WTC11 (cell line): ENCODE measurements at regions of chr5 and their contacts with region 1.

Region 1: GRCh38 chr5:139633295-139634027 is 14.7 kb upstream of the CXXC5 start:
- DNase-seq: peak; percentile 71
- ATAC-seq: peak; percentile 47
- H3K4me3 Mint-ChIP-seq: no peak overlapping the region
- H3K27ac Mint-ChIP-seq: no peak overlapping the region
- H3K4me1 Mint-ChIP-seq: peaks cover 41% of the 10 kb centered on the region
- H3K27me3 Mint-ChIP-seq: no peaks in the 10 kb centered on the region
- CTCF ChIP-seq: peak; percentile 94

Region 2: DNA sequence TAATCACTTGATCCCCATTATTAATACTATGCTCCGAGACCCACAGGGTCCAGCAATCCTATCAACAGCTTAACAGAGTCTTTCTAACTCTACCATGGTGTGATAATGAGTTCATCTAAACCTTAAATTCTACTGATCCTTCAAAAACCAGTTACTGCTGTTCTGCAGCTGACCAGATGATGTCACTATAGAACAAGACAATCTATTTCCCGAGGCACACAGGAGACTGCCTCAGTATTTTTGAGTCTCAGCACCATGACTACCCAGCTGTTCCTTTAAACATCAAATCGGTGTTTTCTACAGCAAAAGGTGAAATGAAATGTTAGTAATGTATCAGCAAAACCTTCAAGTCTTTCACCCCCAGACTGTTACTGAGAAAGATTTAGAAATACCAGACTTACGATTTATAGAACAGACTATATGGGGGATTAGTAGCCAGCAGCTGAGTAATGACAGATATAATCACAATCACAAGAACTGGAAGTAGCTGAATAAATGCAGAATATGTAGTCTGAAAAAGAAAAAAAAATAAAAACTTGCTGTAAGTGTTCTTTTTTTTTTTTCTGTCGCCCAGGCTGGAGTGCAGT is 211.1 kb before region 1 on chr5:
- CTCF ChIA-PET with region 1: interaction called, 13 read pairs
- POLR2A ChIA-PET with region 1: no interaction called
- DNase-seq: no peak
- ATAC-seq: peak; percentile 89
- H3K4me3 Mint-ChIP-seq: no peak overlapping the region
- H3K27ac Mint-ChIP-seq: peak overlapping the region; percentile 60; the same call in 1 of the 2 replicates
- H3K4me1 Mint-ChIP-seq: peaks cover 9% of the 10 kb centered on the region
- H3K27me3 Mint-ChIP-seq: no peaks in the 10 kb centered on the region; the same call in 1 of the 2 replicates
- CTCF ChIP-seq: no peak

Region 3: GRCh38 chr5:139574641-139575312 is 58.7 kb before region 1 on chr5:
- CTCF ChIA-PET with region 1: interaction called, 25 read pairs
- POLR2A ChIA-PET with region 1: interaction called, 3 read pairs
- DNase-seq: no peak
- ATAC-seq: peak; percentile 74
- H3K4me3 Mint-ChIP-seq: no peak overlapping the region
- H3K27ac Mint-ChIP-seq: peak overlapping the region; percentile 96
- H3K4me1 Mint-ChIP-seq: peaks cover 32% of the 10 kb centered on the region
- H3K27me3 Mint-ChIP-seq: no peaks in the 10 kb centered on the region
- CTCF ChIP-seq: no peak

Region 4: DNA sequence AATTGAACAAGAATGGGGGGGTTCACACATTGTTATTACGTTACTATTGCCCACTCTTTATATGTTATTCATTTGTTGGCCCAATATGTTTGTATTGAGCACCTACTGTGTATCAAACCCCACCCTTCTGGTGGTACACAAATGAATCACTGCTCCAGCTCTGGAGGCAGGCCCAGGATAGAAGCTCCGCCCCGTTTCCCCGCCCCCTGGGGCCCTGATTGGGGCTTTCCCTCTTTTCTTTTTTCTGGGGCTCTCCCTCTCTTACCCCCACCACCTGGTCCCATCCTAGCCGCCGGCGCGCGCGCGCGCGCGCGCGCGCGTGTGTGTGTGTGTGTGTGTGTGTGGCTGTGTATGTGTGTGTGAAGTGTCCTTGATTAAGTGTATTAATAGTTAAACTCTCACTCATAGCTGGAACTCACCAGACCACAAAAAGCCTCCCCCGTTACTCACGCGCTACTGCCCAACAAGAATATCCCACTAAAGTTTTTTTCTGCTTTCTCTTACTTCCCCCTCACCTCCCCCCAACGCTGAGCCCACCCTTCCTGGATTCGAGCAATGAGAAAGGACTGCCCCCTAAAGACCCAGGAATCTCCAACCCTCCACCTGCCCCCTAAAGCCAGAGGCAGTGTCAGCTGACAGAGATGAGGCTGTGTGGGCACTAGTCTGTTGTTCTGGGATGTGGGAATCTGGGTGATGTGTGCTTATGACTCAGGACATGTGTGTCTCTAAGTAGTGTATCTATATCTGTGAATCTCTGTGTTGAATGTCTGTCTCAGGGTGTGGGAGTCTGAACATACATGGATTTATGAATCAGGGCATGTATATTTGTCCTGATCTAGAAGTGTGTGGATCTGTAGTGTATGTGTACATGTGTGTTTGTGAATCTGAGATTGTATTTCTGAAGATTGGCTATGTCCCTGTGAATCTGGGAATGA is 18.7 kb after region 1 on chr5:
- CTCF ChIA-PET with region 1: interaction called, 235 read pairs
- POLR2A ChIA-PET with region 1: interaction called, 54 read pairs
- DNase-seq: peak; percentile 92
- ATAC-seq: peak; percentile 33
- H3K4me3 Mint-ChIP-seq: peak overlapping the region; percentile 98
- H3K27ac Mint-ChIP-seq: peak overlapping the region; percentile 96
- H3K4me1 Mint-ChIP-seq: peaks cover 63% of the 10 kb centered on the region
- H3K27me3 Mint-ChIP-seq: no peaks in the 10 kb centered on the region
- CTCF ChIP-seq: no peak

Region 5: DNA sequence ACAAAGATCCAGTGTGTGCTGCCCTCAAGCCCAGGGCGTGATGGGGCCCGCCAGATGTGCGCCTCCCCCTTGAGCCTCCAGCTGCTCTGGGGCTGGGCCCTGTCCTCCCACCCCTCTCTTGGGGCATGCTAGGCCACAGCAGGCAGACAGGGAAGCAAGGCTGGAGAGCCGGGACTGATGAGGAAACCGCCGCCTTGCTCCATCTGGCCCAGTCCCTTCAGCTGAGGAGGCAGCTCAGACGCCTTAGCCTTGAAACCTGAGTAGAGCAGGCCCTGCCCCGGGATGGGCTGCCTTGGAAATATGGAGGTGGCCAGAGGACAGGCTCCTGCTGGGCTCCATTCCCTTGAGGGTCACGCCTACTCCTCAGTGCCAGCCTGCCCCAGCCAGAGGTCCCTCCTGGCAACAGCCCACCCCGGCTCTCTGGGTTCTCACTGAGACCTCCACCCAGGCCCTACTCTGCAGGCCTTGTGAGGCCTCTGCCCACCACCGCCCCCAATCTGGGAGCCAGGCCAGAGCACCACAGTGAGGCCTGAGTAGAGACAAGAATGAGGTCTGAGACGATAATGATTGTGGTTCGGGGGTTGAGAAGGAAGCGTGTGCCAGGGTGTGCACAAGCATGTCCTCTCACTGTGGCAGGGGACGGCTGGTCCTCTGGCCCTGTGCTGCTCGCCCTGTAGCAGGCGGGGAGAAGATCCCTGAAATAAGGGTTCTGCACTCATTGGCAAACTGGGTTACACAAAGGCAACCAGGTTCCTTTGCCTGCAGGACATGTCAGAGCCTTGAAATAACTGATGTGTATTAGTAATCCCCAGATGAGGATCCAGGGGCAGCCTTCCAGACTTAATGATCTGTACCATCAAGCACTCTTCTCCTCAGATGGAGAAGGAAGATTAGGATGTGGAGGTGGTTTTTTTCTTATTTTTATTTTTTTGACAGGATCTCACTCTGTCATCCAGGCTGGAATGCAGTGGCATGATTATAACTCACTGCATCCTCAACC is 45.6 kb after region 1 on chr5:
- CTCF ChIA-PET with region 1: interaction called, 14 read pairs
- POLR2A ChIA-PET with region 1: interaction called, 3 read pairs
- DNase-seq: peak; percentile 38
- ATAC-seq: peak; percentile 50
- H3K4me3 Mint-ChIP-seq: no peak overlapping the region
- H3K27ac Mint-ChIP-seq: no peak overlapping the region
- H3K4me1 Mint-ChIP-seq: peaks cover 48% of the 10 kb centered on the region
- H3K27me3 Mint-ChIP-seq: no peaks in the 10 kb centered on the region
- CTCF ChIP-seq: no peak

Region 6: DNA sequence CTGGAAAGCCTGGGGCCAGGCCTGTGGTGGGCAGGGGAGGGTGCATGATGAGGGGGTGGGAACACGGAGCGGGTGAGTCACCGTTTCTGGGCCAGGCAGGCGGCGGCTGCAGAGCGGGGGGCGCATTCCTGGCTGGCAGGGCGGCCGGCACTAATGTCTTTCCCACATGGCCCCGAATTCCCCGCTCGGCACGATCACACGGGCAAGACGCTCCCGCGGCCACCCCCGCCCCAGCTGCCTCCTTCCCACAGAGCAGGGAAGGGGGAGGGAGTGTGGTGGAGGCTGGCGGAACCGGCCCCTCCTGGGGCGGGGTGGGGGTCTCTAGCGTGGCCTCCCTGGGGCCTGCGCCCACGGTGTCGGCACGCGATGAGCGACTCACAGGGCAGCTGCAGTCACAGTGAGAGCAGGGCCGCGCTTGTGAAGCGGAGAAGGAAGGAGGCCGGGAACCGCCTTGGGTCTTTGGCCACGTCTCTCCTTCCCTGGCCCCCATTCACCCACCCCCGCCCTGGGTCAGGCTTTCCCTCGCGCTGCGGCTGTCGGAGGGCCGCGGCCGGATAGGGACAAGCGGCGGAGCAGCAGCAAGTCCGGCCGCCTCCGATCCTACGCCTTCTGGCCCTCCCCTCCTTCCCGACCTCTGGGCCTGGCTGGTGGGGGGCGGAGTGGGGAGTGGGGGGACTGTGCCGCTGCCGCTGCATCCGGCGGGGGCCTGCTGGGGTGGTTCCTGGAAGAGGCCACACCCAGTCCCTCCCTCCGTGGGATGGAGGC is 63.6 kb after region 1 on chr5:
- CTCF ChIA-PET with region 1: interaction called, 22 read pairs
- POLR2A ChIA-PET with region 1: interaction called, 4 read pairs
- DNase-seq: peak; percentile 77
- ATAC-seq: peak; percentile 23
- H3K4me3 Mint-ChIP-seq: peak overlapping the region; percentile 66
- H3K27ac Mint-ChIP-seq: peak overlapping the region; percentile 88; the same call in 1 of the 2 replicates
- H3K4me1 Mint-ChIP-seq: peaks cover 60% of the 10 kb centered on the region
- H3K27me3 Mint-ChIP-seq: peaks cover 28% of the 10 kb centered on the region
- CTCF ChIP-seq: no peak

Region 7: DNA sequence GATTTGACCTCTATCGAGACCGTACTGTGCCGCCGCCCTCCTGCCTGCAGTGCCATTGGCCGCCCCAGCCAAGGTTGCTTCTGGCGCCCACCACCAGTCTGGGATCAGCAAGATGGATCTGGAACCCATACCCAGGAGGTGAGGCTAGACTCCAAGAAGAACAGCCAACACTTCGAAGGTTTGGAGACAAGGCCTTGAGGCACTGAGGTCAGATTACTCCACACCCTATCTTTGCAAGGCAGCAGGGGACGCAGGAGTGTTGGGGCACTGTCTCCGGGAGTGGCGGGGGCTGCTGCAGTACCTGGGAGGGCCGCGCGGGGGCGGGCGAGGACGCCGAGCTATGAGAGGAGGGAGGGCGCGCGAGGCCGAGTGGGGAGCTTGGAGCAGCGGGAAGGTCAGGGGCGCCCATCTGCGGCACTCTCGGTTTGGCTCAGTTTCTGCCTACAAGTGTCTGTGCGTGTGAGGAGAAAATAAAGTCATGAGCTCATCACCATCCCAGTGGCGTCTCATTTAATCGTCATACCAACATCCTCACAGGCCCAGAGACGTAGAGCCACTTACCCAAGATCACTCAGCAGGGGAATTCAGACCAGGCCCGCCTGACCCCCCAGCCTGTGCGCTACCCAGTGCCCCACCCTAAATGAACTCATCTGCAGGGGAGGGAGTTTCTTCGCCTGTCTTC is 141.7 kb after region 1 on chr5:
- CTCF ChIA-PET with region 1: interaction called, 53 read pairs
- POLR2A ChIA-PET with region 1: no interaction called
- DNase-seq: peak; percentile 97
- ATAC-seq: peak; percentile 97
- H3K4me3 Mint-ChIP-seq: peak overlapping the region; percentile 34; the same call in 1 of the 2 replicates
- H3K27ac Mint-ChIP-seq: no peak overlapping the region
- H3K4me1 Mint-ChIP-seq: peaks cover 11% of the 10 kb centered on the region; the same call in 1 of the 2 replicates
- H3K27me3 Mint-ChIP-seq: peaks cover 28% of the 10 kb centered on the region
- CTCF ChIP-seq: peak; percentile 98